ENCODE measurements at regions of chr2 and their contacts with region 1.

Region 1: GRCh38 chr2:88055371-88056128 is at the start of gene KRCC1:
- DNase-seq: peak; percentile 94 to 96 (median 95)
- H3K4me3 ChIP-seq: peak within 1 kb of the TSS; percentile 76 to 84
- H3K4me3 Mint-ChIP-seq: peak within 1 kb of the TSS; percentile 90 to 97 (median 95)
- H3K27ac ChIP-seq: peak within 1 kb of the TSS; percentile 93
- H3K27ac Mint-ChIP-seq: peak within 1 kb of the TSS; percentile 89 to 98 (median 98)
- H3K4me1 ChIP-seq: peaks cover 33% of the 10 kb centered on the region
- H3K4me1 Mint-ChIP-seq: peaks cover 35 to 50% (median 42%) of the 10 kb centered on the region in 4 donors
- H3K27me3 ChIP-seq: no peaks in the 10 kb centered on the region
- H3K27me3 Mint-ChIP-seq: no peaks in the 10 kb centered on the region
- total RNA-seq, gene KRCC1: 32.3 to 35.7 TPM

Region 2: GRCh38 chr2:88016086-88016959 is 39.2 kb before region 1 on chr2 and contains the start of gene RNU2-63P:
- CTCF ChIA-PET with region 1: interaction called, 6 read pairs
- POLR2A ChIA-PET with region 1: interaction called, 8 read pairs
- intact Hi-C with region 1: loop called (anchors 1 kb)
- DNase-seq: peak; percentile 79 to 90 (median 85)
- H3K4me3 ChIP-seq: peak within 1 kb of the TSS; percentile 88 to 97
- H3K4me3 Mint-ChIP-seq: peak within 1 kb of the TSS; percentile 97 to 100 (median 98)
- H3K27ac ChIP-seq: peak within 1 kb of the TSS; percentile 87
- H3K27ac Mint-ChIP-seq: peak within 1 kb of the TSS; percentile 99 to 100 (median 99)
- H3K4me1 ChIP-seq: peaks cover 12% of the 10 kb centered on the region
- H3K4me1 Mint-ChIP-seq: peaks cover 13 to 26% (median 19%) of the 10 kb centered on the region in 4 donors
- H3K27me3 ChIP-seq: no peaks in the 10 kb centered on the region
- H3K27me3 Mint-ChIP-seq: no peaks in the 10 kb centered on the region
- total RNA-seq, gene RNU2-63P: 4.3 TPM in 1 of 2 experiments, not detected in the other

Region 3: DNA sequence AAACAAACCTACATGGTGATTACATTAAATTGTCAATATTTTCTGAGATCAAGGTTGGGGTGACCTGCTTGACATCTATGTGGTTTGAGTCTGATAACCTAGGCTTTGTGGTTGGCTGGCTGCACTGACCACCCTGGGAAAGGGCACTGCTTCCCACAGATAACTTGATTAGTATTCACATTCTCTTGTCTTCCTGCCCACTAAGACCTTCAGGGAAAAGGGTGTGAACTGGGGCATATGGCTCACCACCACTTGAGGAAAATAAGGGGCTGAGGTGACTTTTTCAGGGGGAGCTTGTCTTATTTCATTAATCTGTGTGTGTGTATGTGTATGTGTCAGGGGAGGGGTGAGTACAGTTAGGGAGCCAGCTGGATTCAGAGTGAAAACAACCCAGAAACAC is 13.6 kb after region 1 on chr2:
- CTCF ChIA-PET with region 1: interaction called, 11 read pairs
- POLR2A ChIA-PET with region 1: no interaction called
- intact Hi-C with region 1: no loop called
- DNase-seq: no peak
- H3K4me3 ChIP-seq: no peak overlapping the region
- H3K4me3 Mint-ChIP-seq: no peak overlapping the region
- H3K27ac ChIP-seq: no peak overlapping the region
- H3K27ac Mint-ChIP-seq: no peak overlapping the region
- H3K4me1 ChIP-seq: no peaks in the 10 kb centered on the region
- H3K4me1 Mint-ChIP-seq: no peaks in the 10 kb centered on the region
- H3K27me3 ChIP-seq: no peaks in the 10 kb centered on the region
- H3K27me3 Mint-ChIP-seq: no peaks in the 10 kb centered on the region

Region 4: GRCh38 chr2:88090446-88091283 is 35.1 kb after region 1 on chr2:
- CTCF ChIA-PET with region 1: interaction called, 10 read pairs
- POLR2A ChIA-PET with region 1: no interaction called
- intact Hi-C with region 1: no loop called
- DNase-seq: no peak
- H3K4me3 ChIP-seq: no peak overlapping the region
- H3K4me3 Mint-ChIP-seq: peak overlapping the region in 5 of 8 donors; percentile 2 to 24 (median 17)
- H3K27ac ChIP-seq: no peak overlapping the region
- H3K27ac Mint-ChIP-seq: peak overlapping the region; percentile 23 to 85 (median 79)
- H3K4me1 ChIP-seq: peaks cover 10% of the 10 kb centered on the region
- H3K4me1 Mint-ChIP-seq: peaks cover 8 to 18% (median 10%) of the 10 kb centered on the region in 4 donors
- H3K27me3 ChIP-seq: no peaks in the 10 kb centered on the region
- H3K27me3 Mint-ChIP-seq: no peaks in the 10 kb centered on the region

Region 5: DNA sequence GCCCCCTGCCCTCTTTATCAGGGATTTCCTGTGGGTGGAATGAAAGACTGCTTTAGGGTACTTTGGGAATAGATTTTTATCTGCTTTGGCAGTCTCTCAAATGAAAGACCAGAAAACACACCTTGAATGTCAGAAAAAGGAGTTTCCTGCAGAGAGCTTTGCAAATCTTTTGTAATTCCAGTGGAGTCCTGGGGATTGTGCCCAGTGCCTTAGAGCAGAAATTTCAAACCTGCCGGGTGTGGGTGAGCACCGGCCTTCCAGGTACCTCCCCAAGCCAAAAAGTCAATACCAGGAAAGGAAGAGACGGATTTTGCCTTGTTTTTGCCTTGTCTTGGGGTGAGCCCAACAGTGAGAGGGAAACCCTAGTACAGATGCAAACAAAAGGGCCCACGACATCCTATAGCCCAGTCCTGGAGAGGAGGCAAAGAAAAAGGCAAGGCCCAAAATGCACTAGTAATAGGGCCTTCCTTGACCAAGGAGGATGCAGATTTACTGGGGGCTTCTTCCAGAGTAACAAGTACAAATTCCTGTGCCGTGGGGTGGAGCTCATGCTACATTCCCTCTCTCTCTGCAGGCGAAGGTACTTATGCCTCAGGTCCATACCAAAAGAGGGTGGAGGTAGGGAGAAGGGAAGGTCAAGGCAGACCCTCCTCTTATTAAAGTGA is 360.6 kb after region 1 on chr2:
- CTCF ChIA-PET with region 1: no interaction called
- POLR2A ChIA-PET with region 1: no interaction called
- intact Hi-C with region 1: no loop called
- DNase-seq: no peak
- H3K4me3 ChIP-seq: no peak overlapping the region
- H3K4me3 Mint-ChIP-seq: no peak overlapping the region
- H3K27ac ChIP-seq: no peak overlapping the region
- H3K27ac Mint-ChIP-seq: no peak overlapping the region
- H3K4me1 ChIP-seq: no peaks in the 10 kb centered on the region
- H3K4me1 Mint-ChIP-seq: no peaks in the 10 kb centered on the region
- H3K27me3 ChIP-seq: peaks cover 3% of the 10 kb centered on the region
- H3K27me3 Mint-ChIP-seq: peaks cover 9 to 31% of the 10 kb centered on the region in 2 donors

Region 6: GRCh38 chr2:88691339-88692183 is 636.0 kb after region 1 on chr2 and contains the start of gene RPIA:
- CTCF ChIA-PET with region 1: no interaction called
- POLR2A ChIA-PET with region 1: no interaction called
- intact Hi-C with region 1: loop called (anchors 1 kb)
- DNase-seq: peak; percentile 98 to 100 (median 98)
- H3K4me3 ChIP-seq: peak within 1 kb of the TSS; percentile 77 to 95
- H3K4me3 Mint-ChIP-seq: peak within 1 kb of the TSS; percentile 93 to 98 (median 96)
- H3K27ac ChIP-seq: peak within 1 kb of the TSS; percentile 78
- H3K27ac Mint-ChIP-seq: peak within 1 kb of the TSS; percentile 91 to 98 (median 96)
- H3K4me1 ChIP-seq: peaks cover 29% of the 10 kb centered on the region
- H3K4me1 Mint-ChIP-seq: peaks cover 37 to 68% (median 47%) of the 10 kb centered on the region in 4 donors
- H3K27me3 ChIP-seq: no peaks in the 10 kb centered on the region
- H3K27me3 Mint-ChIP-seq: no peaks in the 10 kb centered on the region
- total RNA-seq, gene RPIA: 20.9 to 23.2 TPM

Measured in CD4-positive, alpha-beta memory T cell (primary cell).